ENCODE measurements at regions of chr1 and their contacts with region 1.

Region 1: DNA sequence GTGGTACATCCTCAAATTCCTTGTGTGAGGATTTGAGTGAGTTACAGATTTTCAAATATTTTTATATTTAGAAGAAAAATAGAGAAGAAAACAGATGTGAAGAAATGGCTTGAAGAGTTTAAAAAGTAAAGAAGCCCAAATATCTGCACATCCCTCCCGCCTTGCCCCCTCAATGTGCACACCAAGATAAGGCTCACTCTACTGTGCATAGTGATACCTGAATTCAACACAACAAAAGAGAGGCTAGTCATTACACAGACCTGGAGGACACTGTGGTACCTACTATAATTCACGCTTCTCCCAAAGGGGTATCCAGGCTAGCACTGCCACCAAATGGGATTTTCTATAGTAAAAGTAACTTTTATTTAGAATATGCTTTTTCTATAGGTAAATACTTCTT is 44.0 kb upstream of the SYT2 start:
- DNase-seq: no peak
- H3K4me3 ChIP-seq: no peak overlapping the region
- H3K27ac ChIP-seq: no peak overlapping the region
- H3K4me1 ChIP-seq: no peaks in the 10 kb centered on the region
- H3K27me3 ChIP-seq: no peaks in the 10 kb centered on the region
- CTCF ChIP-seq: no peak
- POLR2A ChIP-seq: no peak

Region 2: DNA sequence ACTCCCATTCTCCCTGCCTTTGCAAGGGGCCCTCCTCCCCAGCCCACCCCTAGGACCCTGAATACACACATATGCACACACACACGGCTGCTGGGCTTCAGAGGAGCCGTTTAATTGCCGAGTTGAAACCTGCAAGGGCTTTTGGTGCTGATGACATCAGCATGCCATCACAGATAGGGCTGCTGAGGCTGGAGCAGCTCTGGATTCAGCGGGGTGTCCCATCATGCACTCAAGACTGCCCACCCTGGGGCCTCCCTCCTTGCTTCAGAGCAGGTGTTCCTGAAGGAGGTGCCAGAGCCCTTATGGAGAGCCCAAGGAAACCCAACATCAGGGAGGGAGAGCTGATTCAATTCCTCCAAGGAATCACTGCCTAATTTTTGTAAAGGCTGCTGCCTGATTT is 49.7 kb before region 1 on chr1:
- intact Hi-C with region 1: loop called (anchors 2 kb)
- DNase-seq: no peak
- H3K4me3 ChIP-seq: no peak overlapping the region
- H3K27ac ChIP-seq: no peak overlapping the region
- H3K4me1 ChIP-seq: peaks cover 7% of the 10 kb centered on the region
- H3K27me3 ChIP-seq: peaks cover 11% of the 10 kb centered on the region
- CTCF ChIP-seq: no peak
- POLR2A ChIP-seq: no peak